ENCODE measurements at regions of chr3 and their contacts with region 1.

Region 1: DNA sequence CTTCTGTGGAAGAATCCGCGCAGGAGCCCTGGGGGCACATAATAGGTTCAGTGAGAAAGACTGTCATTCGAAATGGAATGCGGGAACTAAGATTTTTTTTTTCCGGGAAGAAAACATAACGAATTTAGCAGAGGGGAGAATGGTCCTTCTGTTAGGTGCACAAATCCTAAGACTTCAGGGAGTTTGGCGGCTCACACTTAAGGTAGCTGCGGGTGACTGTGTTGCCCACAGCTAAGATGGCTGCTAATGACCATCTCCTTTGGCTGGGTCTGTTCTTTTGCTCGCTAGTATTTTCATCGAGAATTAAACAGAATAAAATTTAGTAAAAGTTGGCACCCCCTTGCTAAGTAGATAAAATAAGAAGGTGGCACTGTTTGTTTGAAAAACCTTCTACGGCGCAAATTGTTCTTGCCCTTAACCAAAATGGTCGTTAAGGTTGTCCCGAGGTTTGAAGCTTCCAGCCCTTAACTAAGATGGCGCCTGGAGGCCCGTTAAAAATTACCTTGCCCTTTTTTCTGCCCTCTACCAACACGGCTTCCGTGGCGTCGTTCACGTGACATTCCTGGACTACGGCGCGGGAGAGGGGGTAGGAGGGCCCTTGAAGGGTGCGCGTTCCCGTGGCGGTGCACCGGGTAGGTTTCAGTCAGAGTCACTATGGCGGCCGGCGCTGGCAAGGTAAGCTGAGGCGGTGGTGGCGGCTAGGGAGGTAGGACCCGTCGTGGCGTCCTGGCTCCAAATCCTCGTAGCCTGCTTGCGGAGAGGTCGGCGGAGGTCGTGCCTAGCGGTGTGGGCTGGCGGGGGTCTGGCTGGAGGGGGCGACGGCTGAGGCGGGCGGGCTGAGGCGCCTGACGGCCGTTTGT is at the start of gene SLMAP:
- DNase-seq: peak; percentile 98
- ATAC-seq: peak; percentile 99
- total RNA-seq, gene SLMAP: 274 TPM

Region 2: GRCh38 chr3:57692259-57693147 is 63.4 kb before region 1 on chr3 and contains the start of gene DENND6A:
- intact Hi-C with region 1: loop called (anchors 5 kb)
- DNase-seq: peak; percentile 98
- ATAC-seq: peak; percentile 98
- total RNA-seq, gene DENND6A: 15.0 TPM

Region 3: GRCh38 chr3:57852896-57853295 is 97.0 kb after region 1 on chr3:
- intact Hi-C with region 1: no loop called
- DNase-seq: no peak
- ATAC-seq: no peak